GM12878 (cell line): ENCODE measurements at regions of chr15 and their contacts with region 1.

Region 1: DNA sequence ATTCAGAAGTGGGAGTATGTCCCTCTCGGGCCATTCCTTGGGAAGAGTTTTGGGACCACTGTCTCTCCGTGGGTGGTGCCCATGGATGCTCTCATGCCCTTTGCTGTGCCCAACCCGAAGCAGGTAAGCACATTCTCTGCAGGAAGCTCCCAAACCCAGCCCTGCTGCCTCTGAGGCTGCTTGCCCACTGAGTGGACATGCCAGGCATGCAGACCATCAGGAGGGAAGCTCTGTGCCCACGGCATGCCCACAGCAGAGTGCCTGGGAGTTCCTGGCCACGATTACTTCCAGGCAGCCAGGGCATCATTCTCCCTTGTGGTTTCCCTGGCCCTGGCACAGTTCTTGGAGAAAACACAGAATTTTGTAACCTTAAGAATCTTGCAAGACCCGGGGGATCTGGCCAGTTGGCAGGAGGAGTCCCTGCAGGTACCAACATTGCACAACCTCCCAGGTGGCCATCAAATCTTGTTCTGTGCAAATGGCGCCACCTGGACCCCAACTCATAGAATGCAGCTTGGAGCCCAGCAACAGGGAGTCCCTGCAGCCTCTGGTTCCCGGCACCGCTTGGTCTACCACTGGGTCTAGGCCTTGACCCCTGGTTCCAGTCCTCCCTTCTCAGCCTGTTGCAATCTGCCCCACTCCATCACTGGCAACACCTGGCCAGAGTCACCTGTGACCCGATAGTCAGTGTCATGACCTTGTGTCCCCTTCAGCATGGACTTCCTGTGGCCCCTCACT is 20.4 kb downstream of the FAH start:
- DNase-seq: no peak
- ATAC-seq: peak; percentile 99
- H3K4me3 ChIP-seq: no peak overlapping the region
- H3K27ac ChIP-seq: no peak overlapping the region
- H3K4me1 ChIP-seq: no peaks in the 10 kb centered on the region; the same call in 1 of the 2 replicates
- H3K27me3 ChIP-seq: no peaks in the 10 kb centered on the region
- CTCF ChIP-seq: peak; percentile 80 to 84 (median 81)
- EP300 ChIP-seq: no peak
- POLR2A ChIP-seq: no peak
- RAD21 ChIP-seq: peak; percentile 96

Region 2: GRCh38 chr15:79779746-79780145 is 393.4 kb before region 1 on chr15:
- CTCF ChIA-PET with region 1: no interaction called
- POLR2A ChIA-PET with region 1: no interaction called
- RAD21 ChIA-PET with region 1: no interaction called
- SMC1A ChIA-PET with region 1: no interaction called
- in situ Hi-C with region 1: loop called (anchors 10 kb)
- intact Hi-C with region 1: loop called (anchors 10 kb)
- DNase-seq: peak; percentile 34
- ATAC-seq: peak; percentile 77
- H3K4me3 ChIP-seq: no peak overlapping the region
- H3K27ac ChIP-seq: no peak overlapping the region
- H3K4me1 ChIP-seq: peaks cover 13% of the 10 kb centered on the region
- H3K27me3 ChIP-seq: no peaks in the 10 kb centered on the region
- CTCF ChIP-seq: no peak
- EP300 ChIP-seq: no peak
- POLR2A ChIP-seq: no peak
- RAD21 ChIP-seq: no peak

Region 3: DNA sequence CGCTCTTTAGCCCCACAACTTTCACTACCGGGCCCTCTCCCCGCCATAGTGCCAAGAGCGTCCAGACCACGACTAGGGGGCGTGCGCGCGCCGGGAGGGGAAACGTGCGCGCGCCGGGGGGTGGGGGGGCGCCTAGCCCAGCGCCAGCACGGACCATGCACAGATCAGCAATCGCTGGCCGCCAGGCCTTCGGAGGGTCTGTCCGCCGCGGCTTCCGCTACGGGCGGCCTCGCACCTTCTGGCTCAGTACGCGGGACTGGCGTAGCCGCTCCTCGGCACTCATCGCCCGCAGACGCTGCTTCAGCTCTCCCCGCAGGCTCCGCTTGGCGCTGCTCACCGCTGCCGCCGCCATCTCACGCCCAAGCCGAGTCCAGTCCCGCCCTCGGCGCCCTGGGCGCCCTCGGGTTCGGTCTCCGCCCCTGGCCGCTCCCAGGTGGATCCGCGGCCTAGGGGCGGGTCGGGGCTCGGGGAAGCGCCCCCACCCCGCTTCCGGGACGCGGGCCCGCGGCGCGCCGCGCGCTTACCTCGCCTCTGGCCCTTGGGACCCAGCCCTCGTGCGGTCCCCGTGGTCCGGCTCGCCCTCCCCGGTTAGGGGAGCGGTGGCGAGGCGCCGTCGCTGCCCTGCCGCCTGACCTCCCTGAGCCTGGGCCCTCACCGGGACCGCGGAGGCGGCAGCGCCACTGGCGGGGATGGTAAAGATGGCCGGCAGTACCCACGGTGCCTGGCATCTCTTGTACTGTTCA is 276.4 kb before region 1 on chr15 and contains the start of gene MTHFS:
- CTCF ChIA-PET with region 1: interaction called, 6 read pairs
- POLR2A ChIA-PET with region 1: no interaction called
- RAD21 ChIA-PET with region 1: no interaction called
- SMC1A ChIA-PET with region 1: interaction called, 7 read pairs
- in situ Hi-C with region 1: no loop called
- intact Hi-C with region 1: loop called (anchors 10 kb)
- DNase-seq: no peak
- ATAC-seq: peak; percentile 86
- H3K4me3 ChIP-seq: peak within 1 kb of the TSS; percentile 66
- H3K27ac ChIP-seq: peak within 1 kb of the TSS; percentile 85
- H3K4me1 ChIP-seq: peaks cover 16% of the 10 kb centered on the region
- H3K27me3 ChIP-seq: no peaks in the 10 kb centered on the region
- CTCF ChIP-seq: peak; percentile 44 to 62 (median 54)
- EP300 ChIP-seq: 0 out of 4 replicates have a peak, but pooled peaks of 1 of the 2 experiments have one; percentile 26
- POLR2A ChIP-seq: peak; percentile 94
- RAD21 ChIP-seq: peak; percentile 57
- polyA plus RNA-seq, gene MTHFS: 14.0 to 24.5 TPM

Region 4: GRCh38 chr15:80010131-80010673 is 163.0 kb before region 1 on chr15:
- CTCF ChIA-PET with region 1: no interaction called
- POLR2A ChIA-PET with region 1: no interaction called
- RAD21 ChIA-PET with region 1: no interaction called
- SMC1A ChIA-PET with region 1: interaction called, 3 read pairs
- in situ Hi-C with region 1: no loop called
- intact Hi-C with region 1: loop called (anchors 5 kb)
- DNase-seq: no peak
- ATAC-seq: peak; percentile 61
- H3K4me3 ChIP-seq: peak overlapping the region; percentile 32; the same call in 1 of the 2 replicates
- H3K27ac ChIP-seq: peak overlapping the region; percentile 93
- H3K4me1 ChIP-seq: peaks cover 43% of the 10 kb centered on the region
- H3K27me3 ChIP-seq: no peaks in the 10 kb centered on the region
- CTCF ChIP-seq: no peak
- EP300 ChIP-seq: no peak
- POLR2A ChIP-seq: no peak
- RAD21 ChIP-seq: no peak

Region 5: DNA sequence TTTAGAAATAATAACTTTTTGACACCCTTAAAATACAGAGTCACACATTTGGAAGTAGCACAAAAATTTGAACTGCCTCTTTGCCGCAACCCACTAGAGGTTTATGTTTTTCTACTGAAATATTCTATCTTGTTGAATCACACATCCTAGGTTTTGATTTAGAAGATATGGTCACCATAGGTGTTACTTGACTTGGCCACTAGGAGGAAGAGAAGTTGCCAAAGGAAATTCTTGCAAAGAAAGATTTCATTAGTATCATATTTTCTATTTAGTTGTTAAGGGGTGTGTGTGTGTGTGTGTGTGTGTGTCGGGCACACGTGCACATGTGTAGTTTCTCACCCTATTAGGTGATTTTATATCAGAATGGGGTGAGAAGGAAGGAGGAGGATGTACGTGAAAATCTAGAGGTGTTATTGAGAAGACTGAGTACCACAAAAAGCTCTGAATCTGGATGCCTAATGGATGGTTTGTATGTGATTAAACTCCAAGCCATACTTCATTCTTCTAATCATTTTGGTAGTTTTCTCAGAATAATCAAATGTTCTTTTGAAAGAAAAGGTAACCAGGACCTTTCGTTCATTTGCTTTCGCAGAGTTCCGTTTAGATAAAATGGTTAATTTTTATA is 82.2 kb before region 1 on chr15:
- CTCF ChIA-PET with region 1: no interaction called
- POLR2A ChIA-PET with region 1: no interaction called
- RAD21 ChIA-PET with region 1: no interaction called
- SMC1A ChIA-PET with region 1: no interaction called
- in situ Hi-C with region 1: no loop called
- intact Hi-C with region 1: no loop called
- DNase-seq: no peak
- ATAC-seq: peak; percentile 67
- H3K4me3 ChIP-seq: no peak overlapping the region
- H3K27ac ChIP-seq: no peak overlapping the region
- H3K4me1 ChIP-seq: no peaks in the 10 kb centered on the region
- H3K27me3 ChIP-seq: no peaks in the 10 kb centered on the region
- CTCF ChIP-seq: peak; percentile 4 to 42 (median 31); a peak in 2 of 6 replicates
- EP300 ChIP-seq: no peak
- POLR2A ChIP-seq: no peak
- RAD21 ChIP-seq: 0 out of 2 replicates have a peak, but pooled peaks have one; percentile 24